K562 (cell line): ENCODE measurements at regions of chr2 and their contacts with region 1.

Region 1: DNA sequence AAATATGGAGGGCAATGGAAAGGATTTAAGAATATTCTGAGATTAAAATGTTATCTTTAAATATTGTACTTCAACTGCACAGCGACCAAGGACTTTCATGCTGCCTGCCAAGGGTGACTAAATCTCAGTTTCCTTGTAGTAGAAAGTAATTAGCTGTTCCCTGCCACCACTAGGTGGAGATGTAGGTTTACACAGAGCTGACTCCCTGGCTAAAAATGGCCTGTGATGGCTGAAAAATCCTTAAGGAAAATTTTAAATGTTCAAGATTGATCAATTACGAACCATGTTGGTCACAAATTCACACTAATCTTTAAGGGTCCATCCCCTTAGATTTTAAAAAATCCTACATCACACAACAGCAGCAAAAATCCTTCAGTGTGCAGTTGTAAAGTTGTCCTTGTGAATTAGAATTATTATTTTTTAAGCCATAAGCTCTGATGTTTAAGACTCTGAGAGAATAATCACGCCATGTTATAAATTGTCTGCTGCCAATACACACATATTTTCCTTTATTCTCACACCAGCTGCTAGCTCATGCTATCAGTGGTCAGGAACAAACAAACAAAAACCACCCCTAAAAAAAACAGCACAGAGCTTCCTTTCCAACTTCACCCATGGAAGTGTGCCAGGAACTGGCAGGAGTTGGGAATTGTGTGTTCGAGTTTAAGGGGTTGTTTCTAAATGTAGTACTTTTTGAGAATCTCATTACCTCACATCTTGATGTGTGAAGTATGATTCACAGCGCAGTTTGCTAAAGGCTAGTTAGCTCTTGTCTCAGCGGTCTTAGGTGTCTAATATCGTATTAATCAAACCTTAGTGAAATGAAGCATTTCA is 399.8 kb downstream of the TMEM182 start:
- DNase-seq: peak; percentile 52 to 59 (median 57)
- ATAC-seq: peak; percentile 76
- H3K4me3 ChIP-seq: no peak overlapping the region
- H3K27ac ChIP-seq: no peak overlapping the region
- H3K4me1 ChIP-seq: no peaks in the 10 kb centered on the region
- H3K27me3 ChIP-seq: no peaks in the 10 kb centered on the region
- CTCF ChIP-seq: peak; percentile 49 to 77 (median 70)
- EP300 ChIP-seq: no peak
- POLR2A ChIP-seq: no peak
- RAD21 ChIP-seq: peak; percentile 78 to 82

Region 2: GRCh38 chr2:102841107-102841840 is 320.4 kb before region 1 on chr2:
- CTCF ChIA-PET with region 1: no interaction called
- POLR2A ChIA-PET with region 1: no interaction called
- in situ Hi-C with region 1: no loop called
- intact Hi-C with region 1: loop called (anchors 2 kb)
- DNase-seq: peak; percentile 35 to 63 (median 47)
- ATAC-seq: peak; percentile 98
- H3K4me3 ChIP-seq: no peak overlapping the region
- H3K27ac ChIP-seq: no peak overlapping the region
- H3K4me1 ChIP-seq: no peaks in the 10 kb centered on the region; a peak in 1 of 5 replicates
- H3K27me3 ChIP-seq: peaks cover 0 to 11% of the 10 kb centered on the region in 2 experiments; a peak in 2 of 5 replicates
- CTCF ChIP-seq: peak; percentile 58 to 73 (median 69)
- EP300 ChIP-seq: no peak
- POLR2A ChIP-seq: no peak
- RAD21 ChIP-seq: peak; percentile 55 to 70

Region 3: GRCh38 chr2:102852567-102853266 is 309.0 kb before region 1 on chr2:
- CTCF ChIA-PET with region 1: no interaction called
- POLR2A ChIA-PET with region 1: no interaction called
- in situ Hi-C with region 1: no loop called
- intact Hi-C with region 1: no loop called
- DNase-seq: no peak
- ATAC-seq: no peak
- H3K4me3 ChIP-seq: no peak overlapping the region
- H3K27ac ChIP-seq: no peak overlapping the region
- H3K4me1 ChIP-seq: peaks cover 0 to 4% of the 10 kb centered on the region in 2 experiments; a peak in 2 of 5 replicates
- H3K27me3 ChIP-seq: no peaks in the 10 kb centered on the region
- CTCF ChIP-seq: no peak
- EP300 ChIP-seq: no peak
- POLR2A ChIP-seq: no peak
- RAD21 ChIP-seq: no peak

Region 4: GRCh38 chr2:102983786-102984185 is 177.9 kb before region 1 on chr2:
- CTCF ChIA-PET with region 1: no interaction called
- POLR2A ChIA-PET with region 1: no interaction called
- in situ Hi-C with region 1: no loop called
- intact Hi-C with region 1: no loop called
- DNase-seq: no peak
- ATAC-seq: no peak
- H3K4me3 ChIP-seq: no peak overlapping the region
- H3K27ac ChIP-seq: no peak overlapping the region
- H3K4me1 ChIP-seq: no peaks in the 10 kb centered on the region
- H3K27me3 ChIP-seq: no peaks in the 10 kb centered on the region; a peak in 1 of 5 replicates
- CTCF ChIP-seq: no peak
- EP300 ChIP-seq: no peak
- POLR2A ChIP-seq: no peak
- RAD21 ChIP-seq: no peak

Region 5: GRCh38 chr2:104412384-104412783 is 1250.7 kb after region 1 on chr2:
- CTCF ChIA-PET with region 1: interaction called, 4 read pairs
- POLR2A ChIA-PET with region 1: no interaction called
- in situ Hi-C with region 1: no loop called
- intact Hi-C with region 1: loop called (anchors 5 kb)
- DNase-seq: peak; percentile 41 to 52 (median 48)
- ATAC-seq: peak; percentile 74
- H3K4me3 ChIP-seq: no peak overlapping the region
- H3K27ac ChIP-seq: no peak overlapping the region
- H3K4me1 ChIP-seq: no peaks in the 10 kb centered on the region
- H3K27me3 ChIP-seq: no peaks in the 10 kb centered on the region
- CTCF ChIP-seq: peak; percentile 30 to 62 (median 57); a peak in 5 of 6 replicates
- EP300 ChIP-seq: no peak
- POLR2A ChIP-seq: no peak
- RAD21 ChIP-seq: peak; percentile 42 to 56

Region 6: DNA sequence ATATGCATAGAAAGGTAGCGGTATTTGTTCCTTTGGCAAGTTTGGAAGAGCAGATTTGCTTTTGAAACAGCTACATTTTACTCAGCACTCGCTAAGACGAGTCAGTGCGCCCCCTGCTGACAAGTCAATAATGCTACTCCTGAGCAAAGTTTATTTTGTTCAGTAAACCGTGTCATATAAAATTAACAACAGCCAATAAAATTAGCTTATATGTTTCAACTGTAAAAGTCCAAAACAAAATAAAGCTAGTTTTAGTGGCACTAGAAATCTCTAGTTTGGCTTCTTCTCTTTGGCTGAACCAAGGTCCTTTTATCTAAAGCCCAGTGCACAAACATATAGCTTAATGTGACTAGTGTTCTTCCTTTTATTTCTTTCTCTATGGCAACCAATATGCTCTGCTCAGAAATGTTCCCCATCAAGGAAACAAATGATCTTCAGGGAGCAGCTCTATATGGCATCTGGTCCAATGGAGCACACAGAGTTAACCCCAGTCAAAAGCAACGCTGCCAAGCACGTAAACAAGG is 1688.0 kb after region 1 on chr2:
- CTCF ChIA-PET with region 1: no interaction called
- POLR2A ChIA-PET with region 1: no interaction called
- in situ Hi-C with region 1: no loop called
- intact Hi-C with region 1: loop called (anchors 1 kb)
- DNase-seq: peak; percentile 43 to 67 (median 48)
- ATAC-seq: peak; percentile 81
- H3K4me3 ChIP-seq: no peak overlapping the region
- H3K27ac ChIP-seq: no peak overlapping the region
- H3K4me1 ChIP-seq: peaks cover 0 to 13% of the 10 kb centered on the region in 2 experiments; a peak in 2 of 5 replicates
- H3K27me3 ChIP-seq: peaks cover 4 to 26% of the 10 kb centered on the region in 2 experiments; a peak in 3 of 5 replicates
- CTCF ChIP-seq: peak; percentile 61 to 79 (median 71)
- EP300 ChIP-seq: no peak
- POLR2A ChIP-seq: no peak
- RAD21 ChIP-seq: peak; percentile 55 to 67

Region 7: DNA sequence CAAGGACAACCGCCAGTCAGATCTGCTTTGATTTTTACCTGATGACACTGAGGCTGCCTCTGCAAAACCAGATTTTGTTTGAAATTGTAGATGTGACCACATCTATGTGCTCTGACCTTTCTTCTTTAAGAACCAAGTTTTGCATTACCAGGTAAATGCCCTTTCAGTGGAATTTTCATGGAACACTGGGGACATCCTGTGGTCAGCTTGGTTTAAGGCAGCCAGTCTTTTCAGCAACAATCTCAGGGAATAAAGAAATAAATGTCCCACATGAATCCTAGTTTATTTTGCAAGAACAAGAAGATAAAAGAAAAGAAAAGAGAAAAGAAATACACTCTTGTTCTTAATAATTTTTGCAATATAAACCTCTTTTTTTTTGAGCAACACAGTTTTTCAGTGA is 1782.8 kb after region 1 on chr2:
- CTCF ChIA-PET with region 1: no interaction called
- POLR2A ChIA-PET with region 1: no interaction called
- in situ Hi-C with region 1: no loop called
- intact Hi-C with region 1: loop called (anchors 10 kb)
- DNase-seq: peak in 2 of 4 experiments; percentile 16 to 20
- ATAC-seq: no peak
- H3K4me3 ChIP-seq: no peak overlapping the region
- H3K27ac ChIP-seq: no peak overlapping the region
- H3K4me1 ChIP-seq: no peaks in the 10 kb centered on the region
- H3K27me3 ChIP-seq: peaks cover 3 to 20% of the 10 kb centered on the region in 2 experiments; a peak in 4 of 5 replicates
- CTCF ChIP-seq: peak; percentile 27 to 59 (median 32); a peak in 4 of 6 replicates
- EP300 ChIP-seq: no peak
- POLR2A ChIP-seq: no peak
- RAD21 ChIP-seq: peak; percentile 48 to 60